ENCODE measurements at regions of chr14 and their contacts with region 1.

Region 1: DNA sequence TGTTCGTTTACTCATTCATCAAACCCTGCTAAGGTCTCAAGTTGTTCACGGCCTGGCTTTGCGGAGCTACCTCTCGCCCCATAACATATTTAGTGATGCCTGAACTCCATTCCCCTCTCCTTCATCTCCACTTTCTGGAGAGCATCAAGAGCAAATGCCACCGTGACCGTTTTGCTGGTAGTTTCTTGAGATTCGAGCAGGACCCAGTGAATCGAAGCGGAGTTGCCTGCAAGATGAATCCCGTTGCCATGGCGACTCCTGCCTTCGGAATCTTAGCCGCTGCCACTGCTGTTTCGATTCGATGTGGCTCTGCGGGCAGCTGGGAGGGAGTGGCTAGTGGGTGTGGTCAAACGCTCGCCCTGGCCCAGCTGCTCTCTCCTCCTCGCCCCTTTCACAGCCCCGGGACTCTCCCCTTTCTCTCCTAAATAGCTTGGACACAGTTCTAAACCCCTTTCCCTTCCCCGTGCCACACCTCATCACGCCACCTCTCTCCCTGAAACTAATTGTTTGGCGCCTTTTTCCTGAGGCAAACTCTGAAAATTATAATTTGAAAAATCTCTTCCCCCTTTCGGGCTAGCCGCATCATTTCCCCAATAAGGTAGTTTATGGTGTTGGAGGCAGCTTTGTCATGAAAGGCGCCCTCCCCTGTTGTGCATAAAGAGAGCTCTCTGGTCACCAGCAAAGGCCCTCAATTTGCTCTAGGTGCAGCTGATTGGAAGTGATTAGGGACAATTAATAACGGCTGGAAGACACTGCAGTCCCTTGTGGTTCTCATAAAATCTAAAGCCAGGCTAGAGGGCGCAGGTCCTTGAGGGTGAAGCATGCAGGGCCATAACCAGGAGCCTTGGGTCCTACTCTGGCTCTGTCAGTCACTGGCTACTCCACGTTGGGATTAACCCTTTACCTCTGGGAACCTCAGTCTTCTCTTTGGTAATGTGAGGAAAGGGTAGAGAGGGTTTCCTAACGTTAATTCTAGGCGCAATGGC is 1.6 kb downstream of the DAAM1 start:
- DNase-seq: peak; percentile 78 to 84
- ATAC-seq: peak in 7 of 8 donors; percentile 23 to 54 (median 35)
- H3K4me3 ChIP-seq: peak overlapping the region; percentile 76 to 97 (median 86)
- H3K27ac ChIP-seq: peak overlapping the region; percentile 88 to 96 (median 92)
- H3K4me1 ChIP-seq: peaks cover 16 to 60% (median 48%) of the 10 kb centered on the region in 9 donors
- H3K27me3 ChIP-seq: no peaks in the 10 kb centered on the region
- CTCF ChIP-seq: peak in 3 of 9 donors; percentile 15 to 35 (median 23)

Region 2: DNA sequence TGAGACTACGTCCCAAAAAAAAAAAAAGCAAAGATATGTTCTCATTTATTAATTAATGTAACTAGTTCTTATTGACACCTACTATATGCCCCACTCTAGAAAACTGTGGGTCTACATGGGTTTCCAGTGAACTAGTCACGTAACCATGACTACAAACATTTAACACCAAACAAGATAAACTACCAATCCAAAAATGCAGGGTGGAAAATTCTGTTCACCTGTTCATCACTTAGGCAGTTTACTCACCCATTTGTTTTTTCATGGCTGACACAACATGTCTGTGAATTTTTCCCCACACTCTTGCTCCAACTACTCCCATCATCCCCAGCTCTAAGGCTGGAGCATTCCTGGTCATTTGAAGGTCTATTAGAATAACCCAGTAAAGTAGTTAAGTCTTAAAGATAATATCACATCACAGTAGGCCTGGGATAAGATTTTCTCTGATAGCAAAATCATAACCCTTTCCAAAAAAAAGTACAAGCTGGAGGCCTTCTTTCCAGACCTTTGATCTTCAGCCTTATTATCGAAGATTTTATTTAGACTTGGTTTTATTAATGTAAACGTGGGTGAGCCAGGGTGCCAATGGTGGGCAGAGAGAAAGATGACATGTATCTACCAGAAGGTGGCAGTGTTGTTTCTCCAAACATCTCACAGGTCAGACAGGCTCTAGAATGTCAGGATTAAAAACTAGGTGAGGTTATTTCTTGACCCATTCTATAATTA is 63.2 kb before region 1 on chr14:
- intact Hi-C with region 1: loop called in 4 of 10 experiments (anchors 5 to 10 kb)
- DNase-seq: peak in 1 of 2 donors; percentile 32
- ATAC-seq: peak in 7 of 8 donors; percentile 79 to 91 (median 89)
- H3K4me3 ChIP-seq: no peak overlapping the region
- H3K27ac ChIP-seq: no peak overlapping the region
- H3K4me1 ChIP-seq: peaks cover 0 to 9% (median 0%) of the 10 kb centered on the region in 9 donors
- H3K27me3 ChIP-seq: no peaks in the 10 kb centered on the region
- CTCF ChIP-seq: peak; percentile 60 to 88 (median 81)

Region 3: GRCh38 chr14:59150990-59151389 is 39.1 kb before region 1 on chr14:
- intact Hi-C with region 1: no loop called
- DNase-seq: no peak
- ATAC-seq: peak in 2 of 8 donors; percentile 35 to 58
- H3K4me3 ChIP-seq: no peak overlapping the region
- H3K27ac ChIP-seq: no peak overlapping the region
- H3K4me1 ChIP-seq: peaks cover 0 to 4% (median 0%) of the 10 kb centered on the region in 9 donors
- H3K27me3 ChIP-seq: no peaks in the 10 kb centered on the region
- CTCF ChIP-seq: no peak

Region 4: GRCh38 chr14:59254146-59254941 is 64.3 kb after region 1 on chr14:
- intact Hi-C with region 1: loop called in 6 of 10 experiments (anchors 2 to 10 kb)
- DNase-seq: peak; percentile 60 to 89
- ATAC-seq: peak; percentile 84 to 94 (median 90)
- H3K4me3 ChIP-seq: peak overlapping the region in 1 of 10 donors; percentile 11
- H3K27ac ChIP-seq: peak overlapping the region; percentile 74 to 94 (median 86)
- H3K4me1 ChIP-seq: peaks cover 10 to 85% (median 59%) of the 10 kb centered on the region in 9 donors
- H3K27me3 ChIP-seq: no peaks in the 10 kb centered on the region
- CTCF ChIP-seq: peak in 2 of 9 donors; percentile 14 to 30

Region 5: GRCh38 chr14:59313144-59313651 is 123.1 kb after region 1 on chr14:
- intact Hi-C with region 1: loop called in 3 of 10 experiments (anchors 10 kb)
- DNase-seq: no peak
- ATAC-seq: no peak
- H3K4me3 ChIP-seq: no peak overlapping the region
- H3K27ac ChIP-seq: peak overlapping the region in 5 of 10 donors; percentile 5 to 39 (median 35)
- H3K4me1 ChIP-seq: peaks cover 14 to 88% (median 55%) of the 10 kb centered on the region in 9 donors
- H3K27me3 ChIP-seq: no peaks in the 10 kb centered on the region
- CTCF ChIP-seq: no peak

Region 6: GRCh38 chr14:59360923-59361794 is 171.1 kb after region 1 on chr14:
- intact Hi-C with region 1: loop called in 1 of 10 experiments (anchors 5 kb)
- DNase-seq: peak; percentile 74 to 81
- ATAC-seq: peak; percentile 41 to 80 (median 72)
- H3K4me3 ChIP-seq: peak overlapping the region in 5 of 10 donors; percentile 0 to 38 (median 14)
- H3K27ac ChIP-seq: peak overlapping the region; percentile 21 to 91 (median 86)
- H3K4me1 ChIP-seq: peaks cover 13 to 87% (median 71%) of the 10 kb centered on the region in 9 donors
- H3K27me3 ChIP-seq: no peaks in the 10 kb centered on the region
- CTCF ChIP-seq: peak in 3 of 9 donors; percentile 27 to 31 (median 28)

Region 7: DNA sequence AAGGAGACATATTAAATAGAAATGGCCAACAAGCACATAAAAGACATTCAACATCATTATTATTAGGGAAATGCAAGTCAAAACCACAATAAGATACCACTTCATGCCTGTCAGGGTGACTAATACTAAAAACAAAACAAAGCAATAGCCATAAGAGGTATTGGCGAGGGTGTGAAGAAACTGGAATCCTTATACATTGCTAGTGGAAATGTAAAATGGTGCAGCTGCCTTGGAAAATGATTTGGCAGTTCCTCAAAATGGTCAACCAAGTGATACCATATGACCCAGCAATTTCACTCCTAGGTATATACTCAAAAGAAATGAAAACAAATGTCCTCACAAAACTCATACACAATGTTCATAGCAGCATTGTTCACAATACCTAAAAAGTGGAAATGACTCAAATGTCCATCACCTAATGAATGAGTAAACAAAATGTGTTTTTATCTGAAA is 248.1 kb after region 1 on chr14:
- intact Hi-C with region 1: loop called in 6 of 10 experiments (anchors 5 to 10 kb)
- DNase-seq: no peak
- ATAC-seq: no peak
- H3K4me3 ChIP-seq: no peak overlapping the region
- H3K27ac ChIP-seq: peak overlapping the region in 6 of 10 donors; percentile 20 to 54 (median 32)
- H3K4me1 ChIP-seq: peaks cover 0 to 30% (median 18%) of the 10 kb centered on the region in 9 donors
- H3K27me3 ChIP-seq: no peaks in the 10 kb centered on the region
- CTCF ChIP-seq: no peak

Measured in heart right ventricle (tissue), 16 donors.